ENCODE measurements at regions of chr1 and their contacts with region 1.

Region 1: GRCh38 chr1:58783993-58784757 is at the start of gene JUN:
- DNase-seq: peak; percentile 96
- H3K4me3 Mint-ChIP-seq: peak within 1 kb of the TSS; percentile 91
- H3K27ac Mint-ChIP-seq: peak within 1 kb of the TSS; percentile 93
- H3K4me1 Mint-ChIP-seq: peaks cover 21% of the 10 kb centered on the region
- H3K27me3 Mint-ChIP-seq: peaks cover 16% of the 10 kb centered on the region
- total RNA-seq, gene JUN: 29.5 and 30.2 TPM in 2 replicates

Region 2: DNA sequence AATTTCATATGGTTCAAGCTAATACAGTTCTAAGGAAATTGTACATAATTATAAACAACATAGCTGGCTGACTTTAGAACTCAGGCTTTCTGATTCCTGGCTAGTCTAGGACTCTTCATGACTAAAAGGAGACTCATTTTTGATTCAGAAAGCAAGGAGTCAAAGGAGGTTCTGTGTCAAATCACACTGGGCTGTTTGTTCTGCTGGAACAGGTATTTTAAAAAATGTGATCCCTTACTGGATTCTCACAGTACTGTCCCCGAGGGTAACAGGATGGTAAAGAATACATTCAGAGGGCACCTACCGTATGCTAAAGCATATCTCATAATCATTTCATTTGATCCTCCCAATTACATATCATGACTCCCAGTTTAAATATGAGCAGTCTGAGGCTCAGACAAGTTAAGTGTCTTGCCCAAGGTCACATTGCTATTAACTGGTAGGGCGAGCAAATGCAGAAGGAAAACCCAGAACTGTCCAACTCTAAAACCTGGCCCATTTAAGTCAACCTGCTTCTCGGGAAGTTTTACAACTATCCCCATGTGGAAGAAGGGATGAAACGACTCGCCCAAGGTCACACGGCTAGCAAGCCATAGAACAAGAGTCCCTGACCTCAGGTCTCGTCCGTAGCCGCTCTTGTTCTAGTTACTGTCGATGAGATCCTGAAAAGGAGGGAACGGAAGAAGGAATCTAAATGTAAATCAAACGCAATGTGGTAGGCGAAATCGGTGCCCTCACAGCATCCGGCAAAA is 85.0 kb before region 1 on chr1:
- intact Hi-C with region 1: no loop called
- DNase-seq: no peak
- H3K4me3 Mint-ChIP-seq: peak overlapping the region; percentile 100
- H3K27ac Mint-ChIP-seq: peak overlapping the region; percentile 99
- H3K4me1 Mint-ChIP-seq: peaks cover 15% of the 10 kb centered on the region
- H3K27me3 Mint-ChIP-seq: no peaks in the 10 kb centered on the region

Region 3: GRCh38 chr1:58739856-58740466 is 44.2 kb before region 1 on chr1:
- intact Hi-C with region 1: loop called (anchors 5 kb)
- DNase-seq: no peak
- H3K4me3 Mint-ChIP-seq: no peak overlapping the region
- H3K27ac Mint-ChIP-seq: no peak overlapping the region
- H3K4me1 Mint-ChIP-seq: peaks cover 16% of the 10 kb centered on the region
- H3K27me3 Mint-ChIP-seq: peaks cover 4% of the 10 kb centered on the region

Region 4: GRCh38 chr1:58857680-58858673 is 73.8 kb after region 1 on chr1:
- intact Hi-C with region 1: loop called (anchors 5 kb)
- DNase-seq: peak; percentile 17
- H3K4me3 Mint-ChIP-seq: no peak overlapping the region
- H3K27ac Mint-ChIP-seq: peak overlapping the region; percentile 83
- H3K4me1 Mint-ChIP-seq: peaks cover 31% of the 10 kb centered on the region
- H3K27me3 Mint-ChIP-seq: no peaks in the 10 kb centered on the region

Region 5: DNA sequence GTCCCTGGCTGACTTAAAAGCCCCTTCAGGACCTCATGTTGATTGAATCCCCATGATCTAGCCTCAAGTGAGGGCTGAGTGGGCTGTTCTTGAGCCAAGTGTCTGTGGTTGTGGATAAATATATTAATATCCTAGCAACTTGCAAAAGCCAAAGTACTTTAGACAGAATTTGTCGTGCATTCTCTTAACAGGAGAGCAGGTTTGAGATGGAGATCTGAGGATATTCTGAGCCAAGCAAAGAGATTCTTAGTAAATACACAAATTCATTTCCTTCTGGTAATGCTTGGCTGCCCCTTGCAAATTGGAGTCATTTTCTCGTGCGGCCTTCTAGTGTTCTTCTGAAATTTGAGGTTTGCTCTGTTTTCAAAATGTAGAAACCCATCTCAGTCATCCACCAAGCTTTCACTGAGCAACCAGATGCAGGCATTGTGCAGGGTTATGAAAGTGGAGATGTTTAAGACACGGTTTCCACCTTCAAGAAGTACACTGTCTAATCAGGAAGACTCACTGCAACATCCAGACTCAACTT is 241.8 kb after region 1 on chr1:
- intact Hi-C with region 1: loop called (anchors 1 kb)
- DNase-seq: no peak
- H3K4me3 Mint-ChIP-seq: peak overlapping the region; percentile 69
- H3K27ac Mint-ChIP-seq: no peak overlapping the region
- H3K4me1 Mint-ChIP-seq: peaks cover 16% of the 10 kb centered on the region
- H3K27me3 Mint-ChIP-seq: no peaks in the 10 kb centered on the region

Region 6: DNA sequence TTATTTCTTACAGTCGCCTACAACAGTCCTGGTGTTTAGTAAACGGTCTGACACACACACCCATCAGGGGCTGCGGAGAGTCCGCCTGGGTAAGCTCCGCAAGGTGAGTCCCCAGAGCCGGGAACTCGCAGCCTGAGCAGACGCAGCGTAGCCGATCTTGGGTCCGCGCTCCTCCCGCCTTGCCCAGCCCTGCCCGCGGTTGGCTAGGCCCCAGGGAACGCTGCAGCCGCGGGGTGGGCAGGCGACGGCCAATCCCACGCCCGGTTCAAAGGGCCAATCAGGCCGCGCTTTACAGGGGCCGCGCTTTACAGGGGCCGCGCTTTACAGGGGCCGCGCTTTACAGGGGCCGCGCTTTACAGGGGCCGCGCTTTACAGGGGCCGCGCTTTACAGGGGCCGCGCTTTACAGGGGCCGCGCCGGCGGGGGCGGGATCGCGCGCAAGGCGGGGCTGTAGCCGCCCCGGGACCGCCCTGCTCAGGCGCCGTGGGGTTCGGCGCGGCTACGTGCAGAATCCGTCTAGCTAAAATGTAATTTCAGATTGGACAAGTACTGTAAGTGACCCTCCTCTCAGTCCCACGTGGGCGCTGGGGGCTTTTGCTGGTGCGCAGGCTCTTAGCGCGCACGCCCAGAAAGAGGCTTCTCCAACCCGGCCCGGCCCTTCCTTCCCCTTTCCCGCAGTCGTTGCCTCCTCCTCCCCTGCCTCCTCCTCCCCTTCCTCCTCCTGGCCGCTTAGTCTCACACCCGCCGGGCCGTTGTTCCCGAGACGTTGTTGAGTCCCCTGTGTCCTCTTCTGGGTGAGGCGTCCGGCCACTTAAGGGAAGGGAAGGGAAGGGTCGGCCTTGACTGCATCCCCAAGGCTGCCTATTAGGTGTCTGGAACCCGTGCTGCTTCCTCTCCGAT is 512.4 kb after region 1 on chr1 and contains the start of gene FGGY:
- intact Hi-C with region 1: loop called (anchors 1 kb)
- DNase-seq: peak; percentile 85
- H3K4me3 Mint-ChIP-seq: peak within 1 kb of the TSS; percentile 93
- H3K27ac Mint-ChIP-seq: peak within 1 kb of the TSS; percentile 88
- H3K4me1 Mint-ChIP-seq: peaks cover 36% of the 10 kb centered on the region
- H3K27me3 Mint-ChIP-seq: no peaks in the 10 kb centered on the region
- total RNA-seq, gene FGGY: 10.5 and 13.4 TPM in 2 replicates

Region 7: DNA sequence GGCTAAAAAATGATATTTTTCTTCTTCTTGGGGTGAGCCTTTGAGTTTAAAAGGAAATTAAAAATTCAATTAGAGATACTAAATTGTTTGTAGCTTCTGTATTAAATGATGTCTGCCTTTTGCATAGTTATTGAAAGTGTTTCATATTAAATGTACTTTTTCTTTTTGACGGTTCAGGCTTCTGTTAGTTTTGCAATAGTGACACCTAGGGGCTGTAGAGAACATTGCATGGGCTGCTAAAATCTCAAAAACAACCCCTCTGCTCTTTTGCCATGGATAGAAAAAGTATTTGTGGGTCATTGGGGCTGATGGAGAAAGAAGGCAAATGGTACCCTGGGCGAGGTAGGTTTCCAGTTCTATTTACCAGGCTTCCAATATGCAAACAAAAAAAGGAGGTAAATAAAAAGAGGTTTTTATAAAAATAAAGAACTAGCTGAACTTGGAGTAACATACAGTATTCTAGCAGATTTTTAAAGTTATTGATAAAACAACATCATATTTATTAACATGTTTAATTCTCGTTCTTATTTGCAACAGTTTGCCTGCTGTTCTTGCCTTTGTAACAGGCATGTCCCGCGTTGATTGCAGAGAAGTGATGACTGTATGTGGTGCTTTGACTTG is 915.2 kb after region 1 on chr1:
- intact Hi-C with region 1: loop called (anchors 1 kb)
- DNase-seq: peak; percentile 13
- H3K4me3 Mint-ChIP-seq: no peak overlapping the region
- H3K27ac Mint-ChIP-seq: no peak overlapping the region
- H3K4me1 Mint-ChIP-seq: peaks cover 26% of the 10 kb centered on the region
- H3K27me3 Mint-ChIP-seq: no peaks in the 10 kb centered on the region

Measured in activated T-helper 2 cell treated with anti-CD3 and anti-CD28 coated beads, Interferon-gamma antibody, Interleukin-2, Interleukin-4, amounts not matched to agents 10 μg/mL and 5 μg/mL and 100 μg/mL, durations not matched to agents 14 hours and 24 hours and 36 hours (primary cell).